ENCODE measurements at regions of chr22 and their contacts with region 1.

Region 1: DNA sequence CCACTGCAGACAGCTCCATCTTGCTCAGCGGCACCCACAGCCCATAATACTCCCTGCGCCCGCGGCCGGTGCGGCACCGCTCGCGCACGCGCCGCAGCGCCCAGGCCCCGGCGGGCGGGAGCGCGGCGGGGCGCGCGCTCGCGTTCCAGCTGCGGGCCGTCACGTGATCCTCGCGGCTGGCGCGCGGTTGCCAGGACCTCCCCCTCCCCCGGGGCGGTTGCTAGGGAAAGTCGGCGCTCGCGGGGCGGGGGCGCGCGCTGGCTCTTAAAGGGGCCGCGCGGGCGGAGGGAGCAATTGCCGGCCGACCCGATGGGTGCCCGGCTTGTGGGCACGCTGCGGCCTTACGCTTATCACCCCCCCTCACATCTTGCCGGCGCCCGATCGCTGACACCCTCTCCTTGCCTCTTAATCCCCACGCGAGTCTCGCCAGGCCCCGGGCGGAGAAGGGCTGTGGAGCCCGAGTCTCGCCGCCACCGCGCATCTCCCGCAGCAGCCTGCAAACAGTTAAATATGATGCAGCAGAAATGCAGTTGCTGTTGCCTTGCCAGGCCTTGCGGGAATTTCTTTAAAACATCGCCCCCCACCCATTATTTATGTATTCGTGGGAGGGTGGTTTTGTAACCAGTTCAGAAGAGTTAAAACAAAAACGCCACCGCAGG is at the start of gene CBX6:
- DNase-seq: peak; percentile 97
- ATAC-seq: peak; percentile 55
- H3K4me3 Mint-ChIP-seq: peak within 1 kb of the TSS; percentile 93
- H3K27ac Mint-ChIP-seq: peak within 1 kb of the TSS; percentile 94
- H3K4me1 Mint-ChIP-seq: peaks cover 58% of the 10 kb centered on the region
- H3K27me3 Mint-ChIP-seq: no peaks in the 10 kb centered on the region
- total RNA-seq, gene CBX6: 96.1 to 112 TPM

Region 2: GRCh38 chr22:38398609-38399461 is 473.5 kb before region 1 on chr22:
- CTCF ChIA-PET with region 1: no interaction called
- POLR2A ChIA-PET with region 1: no interaction called
- intact Hi-C with region 1: loop called in 1 of 2 experiments (anchors 5 kb)
- DNase-seq: peak; percentile 92
- ATAC-seq: peak; percentile 67
- H3K4me3 Mint-ChIP-seq: peak overlapping the region; percentile 72
- H3K27ac Mint-ChIP-seq: peak overlapping the region; percentile 47
- H3K4me1 Mint-ChIP-seq: peaks cover 38% of the 10 kb centered on the region
- H3K27me3 Mint-ChIP-seq: no peaks in the 10 kb centered on the region

Region 3: DNA sequence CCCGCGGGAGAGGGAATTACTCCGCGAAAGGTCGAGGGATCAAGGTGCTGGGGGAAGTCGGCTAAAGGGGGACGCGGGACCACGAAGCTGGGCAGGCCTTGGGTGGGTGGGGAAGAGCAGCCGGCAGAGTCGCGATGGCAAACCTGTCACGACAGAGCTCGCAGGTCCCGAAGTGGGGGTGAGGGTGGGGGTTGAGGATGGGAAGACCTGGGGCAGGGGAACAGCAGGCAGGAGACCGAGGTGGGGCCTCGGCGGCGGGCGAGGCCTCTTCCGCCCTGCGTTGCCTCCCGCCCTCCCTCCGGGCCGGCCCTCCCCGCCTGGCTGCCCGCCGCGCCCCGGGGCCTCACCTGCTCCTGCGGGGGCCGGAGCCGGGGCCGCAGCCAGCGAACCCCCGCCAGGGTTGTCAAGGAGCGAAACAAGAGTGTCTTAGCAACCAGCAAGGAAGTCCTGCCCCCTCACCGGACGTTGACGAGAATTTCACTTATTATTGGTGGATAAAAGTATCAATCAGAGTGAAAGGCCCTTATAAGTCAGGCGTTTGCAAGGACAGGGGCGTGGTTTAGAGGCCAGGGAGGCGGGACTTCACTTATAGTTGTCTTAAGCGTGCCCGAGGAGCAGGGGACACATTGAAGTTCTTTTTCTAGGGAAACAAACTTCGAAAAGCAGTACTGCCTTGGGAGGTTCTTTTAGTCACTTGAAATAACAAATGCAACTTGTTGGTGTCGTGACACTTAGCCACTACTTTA is 78.4 kb before region 1 on chr22 and contains the start of gene DNAL4:
- CTCF ChIA-PET with region 1: interaction called, 4 read pairs
- POLR2A ChIA-PET with region 1: no interaction called
- intact Hi-C with region 1: loop called in 1 of 2 experiments (anchors 1 kb)
- DNase-seq: peak; percentile 94
- ATAC-seq: peak; percentile 98
- H3K4me3 Mint-ChIP-seq: peak within 1 kb of the TSS; percentile 84
- H3K27ac Mint-ChIP-seq: peak within 1 kb of the TSS; percentile 67
- H3K4me1 Mint-ChIP-seq: peaks cover 26% of the 10 kb centered on the region
- H3K27me3 Mint-ChIP-seq: no peaks in the 10 kb centered on the region
- total RNA-seq, gene DNAL4: 7.4 to 8.0 TPM

Region 4: GRCh38 chr22:38820020-38820419 is 52.3 kb before region 1 on chr22:
- CTCF ChIA-PET with region 1: no interaction called
- POLR2A ChIA-PET with region 1: no interaction called
- intact Hi-C with region 1: no loop called
- DNase-seq: no peak
- ATAC-seq: no peak
- H3K4me3 Mint-ChIP-seq: no peak overlapping the region
- H3K27ac Mint-ChIP-seq: no peak overlapping the region
- H3K4me1 Mint-ChIP-seq: no peaks in the 10 kb centered on the region
- H3K27me3 Mint-ChIP-seq: peaks cover 2% of the 10 kb centered on the region

Region 5: GRCh38 chr22:38907767-38908166 is 35.5 kb after region 1 on chr22:
- CTCF ChIA-PET with region 1: no interaction called
- POLR2A ChIA-PET with region 1: no interaction called
- intact Hi-C with region 1: no loop called
- DNase-seq: no peak
- ATAC-seq: no peak
- H3K4me3 Mint-ChIP-seq: no peak overlapping the region
- H3K27ac Mint-ChIP-seq: no peak overlapping the region
- H3K4me1 Mint-ChIP-seq: no peaks in the 10 kb centered on the region
- H3K27me3 Mint-ChIP-seq: peaks cover 18% of the 10 kb centered on the region

Region 6: GRCh38 chr22:38941488-38941987 is 69.2 kb after region 1 on chr22:
- CTCF ChIA-PET with region 1: interaction called, 11 read pairs
- POLR2A ChIA-PET with region 1: interaction called, 15 read pairs
- intact Hi-C with region 1: loop called (anchors 1 kb)
- DNase-seq: peak; percentile 88
- ATAC-seq: peak; percentile 88
- H3K4me3 Mint-ChIP-seq: peak overlapping the region; percentile 59
- H3K27ac Mint-ChIP-seq: peak overlapping the region; percentile 87
- H3K4me1 Mint-ChIP-seq: peaks cover 42% of the 10 kb centered on the region
- H3K27me3 Mint-ChIP-seq: peaks cover 36% of the 10 kb centered on the region

Region 7: DNA sequence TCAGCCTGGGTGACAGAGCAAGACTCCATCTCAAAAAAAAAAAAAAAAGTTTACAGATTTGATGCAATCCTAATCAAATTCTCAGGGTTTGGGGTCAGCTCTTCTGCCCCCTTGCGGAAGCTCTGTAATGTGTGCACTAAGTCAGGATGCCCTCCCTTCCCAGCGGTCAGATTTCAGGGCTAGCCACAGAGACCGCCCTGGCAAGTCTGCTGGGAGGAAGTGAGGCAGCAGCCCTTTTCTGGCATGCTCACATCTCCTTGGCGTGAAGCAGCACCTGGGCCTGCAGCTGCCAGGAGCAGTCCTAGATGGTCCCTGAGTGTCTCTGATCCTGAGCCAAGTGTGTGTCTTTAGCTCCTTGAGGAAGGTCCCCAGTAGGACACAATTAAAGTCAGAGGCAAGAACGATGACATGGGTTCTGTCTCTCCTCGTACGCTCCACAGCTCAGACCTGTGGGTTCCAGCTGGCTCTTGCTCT is 130.9 kb after region 1 on chr22:
- CTCF ChIA-PET with region 1: interaction called, 86 read pairs
- POLR2A ChIA-PET with region 1: no interaction called
- intact Hi-C with region 1: loop called (anchors 1 kb)
- DNase-seq: peak; percentile 88
- ATAC-seq: peak; percentile 96
- H3K4me3 Mint-ChIP-seq: no peak overlapping the region
- H3K27ac Mint-ChIP-seq: no peak overlapping the region
- H3K4me1 Mint-ChIP-seq: peaks cover 6% of the 10 kb centered on the region
- H3K27me3 Mint-ChIP-seq: no peaks in the 10 kb centered on the region

Region 8: DNA sequence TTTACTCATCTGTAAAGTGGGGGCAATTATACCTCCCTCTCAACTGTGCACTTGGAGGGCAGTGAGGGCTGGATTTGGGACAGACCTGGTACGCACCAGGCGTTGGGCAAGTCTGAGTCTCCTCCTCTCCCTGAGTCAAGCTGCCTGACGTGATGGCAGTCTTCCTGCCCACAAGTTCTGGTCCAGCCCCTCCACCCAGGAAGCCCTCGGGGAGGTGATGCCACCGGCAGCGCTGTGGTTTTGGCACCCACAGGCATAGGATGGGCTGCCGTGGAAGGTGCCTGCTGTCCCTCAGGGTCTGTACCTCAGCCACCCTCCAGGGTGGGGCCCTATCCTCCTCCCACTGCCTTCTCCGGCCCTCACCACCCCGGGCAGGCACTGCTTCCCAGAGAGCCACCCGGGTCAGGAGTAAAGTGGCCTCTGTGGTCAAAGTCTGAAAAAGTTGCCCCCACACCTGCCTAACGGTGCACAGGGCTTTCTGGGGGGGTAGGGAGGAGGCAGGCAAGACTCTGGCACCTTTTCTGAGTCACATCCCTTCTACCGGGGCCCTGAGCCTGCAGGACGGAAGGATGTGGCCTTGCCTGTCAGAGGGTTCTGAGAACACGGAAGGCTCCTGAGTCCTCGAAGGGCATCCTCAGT is 218.2 kb after region 1 on chr22:
- CTCF ChIA-PET with region 1: interaction called, 4 read pairs
- POLR2A ChIA-PET with region 1: interaction called, 3 read pairs
- intact Hi-C with region 1: loop called in 1 of 2 experiments (anchors 2 kb)
- DNase-seq: peak; percentile 92
- ATAC-seq: peak; percentile 85
- H3K4me3 Mint-ChIP-seq: peak overlapping the region; percentile 45
- H3K27ac Mint-ChIP-seq: peak overlapping the region; percentile 95
- H3K4me1 Mint-ChIP-seq: peaks cover 81% of the 10 kb centered on the region
- H3K27me3 Mint-ChIP-seq: no peaks in the 10 kb centered on the region

Region 9: DNA sequence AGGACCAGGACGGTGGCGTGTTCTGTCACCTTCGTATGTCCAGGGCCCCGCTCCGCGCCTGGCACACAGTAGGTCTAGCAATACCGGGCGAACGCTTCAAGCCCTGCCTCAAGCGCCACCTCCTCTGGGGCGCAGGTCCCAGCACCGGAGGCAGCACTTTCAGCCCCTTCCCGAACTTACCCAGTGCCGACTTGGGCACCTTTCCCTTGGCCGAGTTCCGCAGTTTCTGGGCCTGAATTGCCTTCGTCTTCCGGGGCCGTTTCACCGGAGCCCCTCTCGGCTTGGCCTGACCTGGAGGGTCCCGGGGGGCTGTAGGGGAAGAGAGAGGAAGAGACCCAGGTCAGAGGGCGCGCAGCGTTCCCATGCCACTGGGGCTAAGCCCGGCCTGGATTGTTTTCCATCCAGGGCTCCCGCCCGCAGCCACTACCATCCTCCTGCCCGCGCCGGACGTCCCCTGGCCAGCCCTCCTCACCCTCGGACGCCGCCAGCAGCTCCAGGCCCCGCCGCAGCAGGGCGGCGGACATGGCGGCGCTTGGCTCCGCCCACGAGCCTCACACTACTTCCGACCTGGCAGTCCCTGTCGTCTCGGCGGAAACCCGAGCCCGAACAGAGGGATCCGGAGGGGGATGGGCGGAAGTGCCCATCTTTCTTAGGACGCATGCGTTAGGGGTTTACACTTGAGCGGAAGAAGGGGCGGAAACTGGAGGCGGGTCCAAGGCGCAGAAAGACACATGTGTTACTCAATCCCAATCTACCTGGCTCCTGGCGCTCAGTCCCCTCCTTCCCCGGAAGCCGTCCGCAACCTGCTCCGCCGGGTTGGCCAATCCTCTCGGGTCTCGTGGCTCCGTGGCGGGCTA is 660.1 kb after region 1 on chr22 and contains the start of gene RPS19BP1:
- CTCF ChIA-PET with region 1: no interaction called
- POLR2A ChIA-PET with region 1: no interaction called
- intact Hi-C with region 1: loop called in 1 of 2 experiments (anchors 2 kb)
- DNase-seq: peak; percentile 100
- ATAC-seq: peak; percentile 89
- H3K4me3 Mint-ChIP-seq: peak within 1 kb of the TSS; percentile 98
- H3K27ac Mint-ChIP-seq: peak within 1 kb of the TSS; percentile 92
- H3K4me1 Mint-ChIP-seq: peaks cover 51% of the 10 kb centered on the region
- H3K27me3 Mint-ChIP-seq: no peaks in the 10 kb centered on the region
- total RNA-seq, gene RPS19BP1: 42.8 to 68.8 TPM